Left lung (tissue), 14 donors: ENCODE measurements at regions of chr12 and their contacts with region 1.

Region 1: DNA sequence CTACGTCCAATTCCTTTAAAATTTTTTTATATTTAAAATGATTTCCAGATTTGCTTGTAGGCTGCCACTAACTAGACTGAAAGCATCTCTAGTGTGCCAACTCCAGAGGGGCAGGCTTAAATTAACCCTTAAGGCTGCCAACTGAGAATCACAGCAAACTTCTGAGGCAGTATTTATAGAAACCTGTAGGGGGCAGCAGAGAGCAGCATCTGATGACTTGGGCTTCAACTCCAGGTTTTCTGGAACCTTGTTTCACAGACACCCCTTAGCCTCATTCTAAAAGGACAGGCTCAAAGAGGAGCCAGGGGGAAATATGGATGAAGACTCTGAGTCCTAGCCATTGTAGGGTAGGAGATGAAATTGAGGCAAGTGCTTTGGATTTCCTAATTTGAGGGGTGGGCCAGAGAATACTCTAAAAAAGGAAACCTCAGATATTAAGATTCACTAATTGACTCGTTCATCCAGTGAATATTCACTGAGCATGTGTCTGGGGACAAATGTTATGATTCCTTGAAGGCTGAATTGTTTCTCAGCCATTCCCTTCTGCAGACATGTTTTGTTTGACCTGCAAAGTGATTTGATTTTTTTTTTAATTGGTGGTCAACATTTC is 63.3 kb upstream of the HSPB8 start:
- DNase-seq: peak in 2 of 4 donors; percentile 48 to 68
- ATAC-seq: peak; percentile 80
- H3K4me3 ChIP-seq: no peak overlapping the region
- H3K27ac ChIP-seq: no peak overlapping the region
- H3K4me1 ChIP-seq: no peaks in the 10 kb centered on the region
- H3K27me3 ChIP-seq: no peaks in the 10 kb centered on the region
- CTCF ChIP-seq: peak; percentile 78 to 90

Region 2: GRCh38 chr12:118981285-118982211 is 133.9 kb before region 1 on chr12 and contains the start of gene SRRM4:
- intact Hi-C with region 1: no loop called
- DNase-seq: peak in 3 of 4 donors; percentile 37 to 73 (median 48)
- ATAC-seq: peak; percentile 43
- H3K4me3 ChIP-seq: no peak within 1 kb of the TSS
- H3K27ac ChIP-seq: no peak within 1 kb of the TSS
- H3K4me1 ChIP-seq: no peaks in the 10 kb centered on the region
- H3K27me3 ChIP-seq: peaks cover 25 to 73% of the 10 kb centered on the region in 2 donors
- CTCF ChIP-seq: no peak
- polyA plus RNA-seq, gene SRRM4: 0.30 to 0.48 (median 0.40) TPM

Region 3: DNA sequence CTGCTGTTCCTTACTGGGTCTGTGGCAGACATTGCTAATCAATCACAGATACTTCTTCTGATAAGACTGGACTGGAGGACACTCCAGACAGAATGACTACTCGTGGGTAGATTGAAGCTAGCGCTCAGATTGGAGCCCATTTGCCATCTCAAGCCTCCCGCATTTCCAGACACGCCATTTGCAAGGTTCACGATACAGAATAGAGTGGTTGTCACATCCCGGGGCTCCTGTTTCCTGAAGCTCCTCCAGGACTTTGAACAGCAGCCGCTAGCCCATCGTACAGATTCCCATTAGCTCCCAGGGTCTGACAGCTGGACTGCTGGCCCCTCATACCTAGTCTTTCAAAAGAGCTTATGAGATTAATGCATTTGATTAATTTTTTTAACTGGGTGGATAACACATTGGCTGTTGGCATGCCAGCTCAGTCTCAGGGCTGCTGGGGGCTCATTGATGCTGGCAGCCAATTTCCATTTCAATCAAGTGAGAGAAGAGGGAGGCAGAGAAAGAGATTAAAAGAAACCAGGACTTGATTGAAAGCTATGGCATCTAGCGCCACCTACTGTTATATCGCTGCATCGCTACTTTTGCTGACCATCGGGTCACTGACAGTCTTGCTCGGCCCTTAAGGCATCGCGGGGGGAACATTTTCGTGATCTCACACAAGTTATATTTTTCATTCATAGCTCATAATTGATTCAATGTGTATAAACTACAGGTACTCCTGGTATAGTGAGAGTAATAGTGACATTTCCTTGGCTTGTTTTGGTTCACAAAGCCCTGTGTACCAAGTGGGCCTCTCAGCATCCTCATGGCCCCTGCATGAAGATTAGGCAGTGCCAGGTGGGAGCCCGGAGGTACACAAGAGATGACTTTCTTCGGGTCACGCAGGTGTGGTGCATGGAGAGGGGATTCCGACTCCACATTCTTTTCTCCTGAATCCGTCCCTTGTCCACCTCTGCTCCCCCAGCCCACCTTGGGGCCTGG is 297.7 kb after region 1 on chr12:
- intact Hi-C with region 1: loop called in 1 of 2 experiments (anchors 5 kb)
- DNase-seq: peak in 2 of 4 donors; percentile 68 to 82
- ATAC-seq: peak; percentile 86
- H3K4me3 ChIP-seq: no peak overlapping the region
- H3K27ac ChIP-seq: no peak overlapping the region
- H3K4me1 ChIP-seq: no peaks in the 10 kb centered on the region
- H3K27me3 ChIP-seq: no peaks in the 10 kb centered on the region
- CTCF ChIP-seq: peak; percentile 76 to 86